Mammary epithelial cell (primary cell): ENCODE measurements at regions of chr2 and their contacts with region 1.

Region 1: GRCh38 chr2:47917276-47917961 is 11.1 kb upstream of the FBXO11 start:
- DNase-seq: no peak
- H3K4me3 ChIP-seq: no peak overlapping the region
- H3K27ac ChIP-seq: no peak overlapping the region
- H3K4me1 ChIP-seq: no peaks in the 10 kb centered on the region
- H3K27me3 ChIP-seq: no peaks in the 10 kb centered on the region
- CTCF ChIP-seq: no peak

Region 2: GRCh38 chr2:47724221-47724981 is 193.0 kb before region 1 on chr2:
- CTCF ChIA-PET with region 1: no interaction called
- dilution Hi-C with region 1: no loop called
- in situ Hi-C with region 1: no loop called
- intact Hi-C with region 1: no loop called
- DNase-seq: peak; percentile 37
- H3K4me3 ChIP-seq: no peak overlapping the region
- H3K27ac ChIP-seq: no peak overlapping the region
- H3K4me1 ChIP-seq: no peaks in the 10 kb centered on the region
- H3K27me3 ChIP-seq: no peaks in the 10 kb centered on the region
- CTCF ChIP-seq: no peak

Region 3: GRCh38 chr2:47751875-47752357 is 165.5 kb before region 1 on chr2:
- CTCF ChIA-PET with region 1: no interaction called
- dilution Hi-C with region 1: no loop called
- in situ Hi-C with region 1: no loop called
- intact Hi-C with region 1: no loop called
- DNase-seq: peak; percentile 62
- H3K4me3 ChIP-seq: no peak overlapping the region
- H3K27ac ChIP-seq: peak overlapping the region; percentile 51
- H3K4me1 ChIP-seq: no peaks in the 10 kb centered on the region
- H3K27me3 ChIP-seq: no peaks in the 10 kb centered on the region
- CTCF ChIP-seq: no peak

Region 4: GRCh38 chr2:47984041-47984440 is 66.6 kb after region 1 on chr2:
- CTCF ChIA-PET with region 1: no interaction called
- dilution Hi-C with region 1: no loop called
- in situ Hi-C with region 1: loop called in 1 of 2 experiments (anchors 5 kb)
- intact Hi-C with region 1: no loop called
- DNase-seq: no peak
- H3K4me3 ChIP-seq: no peak overlapping the region
- H3K27ac ChIP-seq: no peak overlapping the region
- H3K4me1 ChIP-seq: no peaks in the 10 kb centered on the region
- H3K27me3 ChIP-seq: peaks cover 2% of the 10 kb centered on the region
- CTCF ChIP-seq: no peak